Calu3 (cell line): ENCODE measurements at regions of chr7 and their contacts with region 1.

Region 1: DNA sequence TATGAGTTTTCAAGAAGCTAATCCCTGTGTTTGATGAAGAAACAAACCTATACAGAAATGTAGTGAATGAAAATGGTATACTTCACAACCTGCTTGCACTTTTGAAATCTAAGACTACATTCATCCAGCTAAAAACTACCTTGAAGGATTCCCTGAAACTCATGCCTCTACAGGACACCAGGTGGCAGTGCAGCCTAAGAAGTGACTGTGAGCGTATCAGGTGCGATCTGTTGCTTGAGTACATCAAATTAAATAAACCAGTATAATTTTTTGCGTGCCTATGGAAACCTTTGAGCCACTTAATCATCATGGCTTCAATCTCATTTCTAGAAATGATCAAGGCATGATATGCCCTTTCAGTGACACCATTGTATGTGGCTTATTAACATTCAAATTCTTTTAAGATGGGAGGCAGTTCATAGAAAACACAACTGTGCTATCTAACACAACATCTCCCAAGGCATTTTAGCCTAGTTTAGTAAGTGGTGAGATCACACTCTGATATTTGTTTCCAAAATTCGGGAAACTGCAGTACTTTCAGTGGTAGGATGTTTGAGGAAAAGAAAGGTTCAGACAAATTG is 57.4 kb downstream of the PPP1R17 start:
- DNase-seq: peak; percentile 82
- H3K4me3 Mint-ChIP-seq: no peak overlapping the region
- H3K27ac Mint-ChIP-seq: no peak overlapping the region
- H3K4me1 Mint-ChIP-seq: peaks cover 21% of the 10 kb centered on the region
- H3K27me3 Mint-ChIP-seq: no peaks in the 10 kb centered on the region
- CTCF ChIP-seq: peak; percentile 93

Region 2: GRCh38 chr7:31234836-31235605 is 509.4 kb before region 1 on chr7:
- CTCF ChIA-PET with region 1: no interaction called
- intact Hi-C with region 1: no loop called
- DNase-seq: no peak
- H3K4me3 Mint-ChIP-seq: no peak overlapping the region
- H3K27ac Mint-ChIP-seq: no peak overlapping the region
- H3K4me1 Mint-ChIP-seq: no peaks in the 10 kb centered on the region
- H3K27me3 Mint-ChIP-seq: peaks cover 92% of the 10 kb centered on the region
- CTCF ChIP-seq: no peak

Region 3: GRCh38 chr7:31763548-31763947 is 19.2 kb after region 1 on chr7:
- CTCF ChIA-PET with region 1: no interaction called
- intact Hi-C with region 1: no loop called
- DNase-seq: no peak
- H3K4me3 Mint-ChIP-seq: no peak overlapping the region
- H3K27ac Mint-ChIP-seq: no peak overlapping the region
- H3K4me1 Mint-ChIP-seq: no peaks in the 10 kb centered on the region
- H3K27me3 Mint-ChIP-seq: no peaks in the 10 kb centered on the region
- CTCF ChIP-seq: peak; percentile 53

Region 4: GRCh38 chr7:32036557-32036956 is 292.2 kb after region 1 on chr7:
- CTCF ChIA-PET with region 1: interaction called, 3 read pairs
- intact Hi-C with region 1: loop called (anchors 5 kb)
- DNase-seq: no peak
- H3K4me3 Mint-ChIP-seq: no peak overlapping the region
- H3K27ac Mint-ChIP-seq: peak overlapping the region; percentile 2
- H3K4me1 Mint-ChIP-seq: peaks cover 92% of the 10 kb centered on the region
- H3K27me3 Mint-ChIP-seq: no peaks in the 10 kb centered on the region
- CTCF ChIP-seq: no peak

Region 5: GRCh38 chr7:32262315-32262714 is 517.9 kb after region 1 on chr7:
- CTCF ChIA-PET with region 1: no interaction called
- intact Hi-C with region 1: loop called (anchors 1 kb)
- DNase-seq: no peak
- H3K4me3 Mint-ChIP-seq: no peak overlapping the region
- H3K27ac Mint-ChIP-seq: no peak overlapping the region
- H3K4me1 Mint-ChIP-seq: peaks cover 6% of the 10 kb centered on the region
- H3K27me3 Mint-ChIP-seq: peaks cover 66% of the 10 kb centered on the region
- CTCF ChIP-seq: no peak

Region 6: GRCh38 chr7:32347244-32347828 is 603.0 kb after region 1 on chr7:
- CTCF ChIA-PET with region 1: no interaction called
- intact Hi-C with region 1: loop called (anchors 5 kb)
- DNase-seq: peak; percentile 67
- H3K4me3 Mint-ChIP-seq: no peak overlapping the region
- H3K27ac Mint-ChIP-seq: no peak overlapping the region
- H3K4me1 Mint-ChIP-seq: no peaks in the 10 kb centered on the region
- H3K27me3 Mint-ChIP-seq: peaks cover 59% of the 10 kb centered on the region
- CTCF ChIP-seq: peak; percentile 88

Region 7: GRCh38 chr7:32479574-32480200 is 735.3 kb after region 1 on chr7:
- CTCF ChIA-PET with region 1: interaction called, 4 read pairs
- intact Hi-C with region 1: loop called (anchors 1 kb)
- DNase-seq: peak; percentile 52
- H3K4me3 Mint-ChIP-seq: no peak overlapping the region
- H3K27ac Mint-ChIP-seq: no peak overlapping the region
- H3K4me1 Mint-ChIP-seq: no peaks in the 10 kb centered on the region
- H3K27me3 Mint-ChIP-seq: peaks cover 43% of the 10 kb centered on the region
- CTCF ChIP-seq: peak; percentile 86